Right ventricle myocardium superior (tissue), 1 donor: ENCODE measurements at regions of chr3 and their contacts with region 1.

Region 1: GRCh38 chr3:45499529-45499928 is 95.0 kb upstream of the LIMD1 start:
- DNase-seq: no peak
- ATAC-seq: peak; percentile 56

Region 2: DNA sequence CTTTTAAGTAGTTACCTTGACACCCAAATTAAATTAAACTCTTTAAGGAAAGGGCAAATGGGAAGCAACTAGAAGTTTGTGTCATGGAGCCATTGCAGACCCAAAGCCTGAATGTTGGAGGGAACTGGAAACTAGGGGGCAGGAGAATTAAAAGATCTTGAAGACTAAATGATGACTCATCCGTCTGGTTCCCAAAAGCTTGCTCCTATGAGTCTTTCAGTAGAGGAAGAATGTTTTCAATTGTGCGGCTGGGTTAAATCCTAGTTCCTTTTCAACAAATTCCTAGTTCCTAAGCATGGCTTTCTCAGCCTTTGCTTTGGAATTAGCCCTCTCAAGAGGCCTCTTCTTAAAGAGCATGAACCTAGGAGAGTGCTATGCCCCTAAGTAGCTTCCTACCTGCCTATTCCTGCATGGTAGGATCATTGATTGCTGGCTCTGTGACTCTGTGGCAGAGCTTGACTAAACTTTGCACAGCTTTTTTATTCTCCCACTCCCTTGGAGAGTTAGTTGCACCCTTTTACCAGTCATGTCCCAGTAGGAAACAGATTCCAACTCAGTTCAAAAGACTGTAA is 455.7 kb before region 1 on chr3:
- intact Hi-C with region 1: loop called (anchors 10 kb)
- DNase-seq: no peak
- ATAC-seq: no peak

Region 3: GRCh38 chr3:45224824-45225464 is 274.6 kb before region 1 on chr3:
- intact Hi-C with region 1: loop called (anchors 10 kb)
- DNase-seq: peak; percentile 85
- ATAC-seq: peak; percentile 79